Esophagus squamous epithelium (tissue), 5 donors: ENCODE measurements at regions of chr1 and their contacts with region 1.

Region 1: DNA sequence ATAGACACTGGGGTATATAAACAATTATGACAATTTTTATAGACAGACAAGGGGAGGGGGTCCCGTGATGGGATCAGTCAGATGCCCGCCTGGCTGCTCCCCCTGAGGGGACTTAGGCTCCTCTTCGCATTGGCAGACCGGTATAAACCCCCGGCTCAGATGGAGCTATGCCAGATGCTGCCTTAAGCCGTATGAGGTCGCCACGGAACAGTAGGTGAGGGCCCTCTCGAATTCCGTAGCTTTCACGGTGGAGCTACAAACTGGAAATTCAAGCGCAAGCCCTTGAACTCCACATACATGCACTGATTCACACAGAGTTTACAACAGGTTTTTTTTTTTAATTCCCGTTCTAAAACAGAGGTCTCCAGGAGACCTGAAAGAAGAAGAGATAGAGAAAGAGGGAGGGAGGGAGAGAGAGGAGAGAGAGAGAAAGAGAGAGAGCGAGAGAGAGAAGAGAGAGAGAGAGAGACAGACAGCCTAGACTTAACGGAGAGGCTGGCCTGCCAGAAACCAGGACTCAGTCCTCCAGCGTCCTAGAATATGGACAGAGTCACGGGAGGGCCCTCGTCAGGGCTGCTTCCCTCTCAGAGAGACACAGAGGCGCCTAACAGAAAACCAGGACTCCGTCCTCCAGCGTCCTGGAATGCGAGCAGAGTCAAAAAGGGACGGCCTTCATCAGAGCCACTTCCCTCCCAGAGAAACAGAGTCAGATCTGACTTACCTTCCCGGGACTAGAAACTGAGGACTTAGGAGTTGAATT is 24.4 kb upstream of the TMEM54 start:
- DNase-seq: no peak
- H3K4me3 ChIP-seq: peak overlapping the region in 1 of 4 donors; percentile 41
- H3K27ac ChIP-seq: no peak overlapping the region
- H3K4me1 ChIP-seq: peaks cover 8 to 17% (median 12%) of the 10 kb centered on the region in 3 donors
- H3K27me3 ChIP-seq: peaks cover 0 to 48% (median 2%) of the 10 kb centered on the region in 4 donors
- CTCF ChIP-seq: no peak
- POLR2A ChIP-seq: no peak

Region 2: GRCh38 chr1:33080885-33081553 is 155.4 kb after region 1 on chr1 and contains the start of gene AZIN2:
- intact Hi-C with region 1: loop called (anchors 10 kb)
- DNase-seq: peak; percentile 84
- H3K4me3 ChIP-seq: peak within 1 kb of the TSS; percentile 60 to 82 (median 78)
- H3K27ac ChIP-seq: peak within 1 kb of the TSS in 3 of 4 donors; percentile 18 to 64 (median 60)
- H3K4me1 ChIP-seq: peaks cover 12 to 27% (median 17%) of the 10 kb centered on the region in 3 donors
- H3K27me3 ChIP-seq: peaks cover 0 to 3% (median 0%) of the 10 kb centered on the region in 4 donors
- CTCF ChIP-seq: no peak
- POLR2A ChIP-seq: peak in 2 of 4 donors; percentile 67
- total RNA-seq, gene AZIN2: 0.27 to 1.5 (median 0.61) TPM

Region 3: DNA sequence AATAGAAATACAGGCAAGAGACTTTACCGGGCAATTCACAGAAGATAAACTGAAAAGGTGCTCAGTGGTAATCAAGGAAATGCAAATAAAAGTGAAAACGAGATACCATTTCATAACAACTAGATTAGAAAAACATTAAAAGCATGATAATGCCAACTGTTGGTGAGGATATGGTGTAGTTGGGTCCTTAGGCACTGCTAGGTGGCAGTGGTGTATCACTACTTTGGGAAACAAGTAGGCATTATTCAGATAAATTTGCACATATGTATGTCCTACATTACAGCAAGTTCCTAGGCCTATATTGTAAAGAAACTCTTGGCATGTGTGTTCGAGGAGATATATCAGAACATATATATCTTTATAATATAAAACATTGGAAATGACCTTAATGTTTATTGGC is 186.4 kb after region 1 on chr1:
- intact Hi-C with region 1: no loop called
- DNase-seq: no peak
- H3K4me3 ChIP-seq: no peak overlapping the region
- H3K27ac ChIP-seq: no peak overlapping the region
- H3K4me1 ChIP-seq: no peaks in the 10 kb centered on the region
- H3K27me3 ChIP-seq: no peaks in the 10 kb centered on the region
- CTCF ChIP-seq: peak in 5 of 6 experiments; percentile 22 to 57 (median 33)
- POLR2A ChIP-seq: no peak

Region 4: DNA sequence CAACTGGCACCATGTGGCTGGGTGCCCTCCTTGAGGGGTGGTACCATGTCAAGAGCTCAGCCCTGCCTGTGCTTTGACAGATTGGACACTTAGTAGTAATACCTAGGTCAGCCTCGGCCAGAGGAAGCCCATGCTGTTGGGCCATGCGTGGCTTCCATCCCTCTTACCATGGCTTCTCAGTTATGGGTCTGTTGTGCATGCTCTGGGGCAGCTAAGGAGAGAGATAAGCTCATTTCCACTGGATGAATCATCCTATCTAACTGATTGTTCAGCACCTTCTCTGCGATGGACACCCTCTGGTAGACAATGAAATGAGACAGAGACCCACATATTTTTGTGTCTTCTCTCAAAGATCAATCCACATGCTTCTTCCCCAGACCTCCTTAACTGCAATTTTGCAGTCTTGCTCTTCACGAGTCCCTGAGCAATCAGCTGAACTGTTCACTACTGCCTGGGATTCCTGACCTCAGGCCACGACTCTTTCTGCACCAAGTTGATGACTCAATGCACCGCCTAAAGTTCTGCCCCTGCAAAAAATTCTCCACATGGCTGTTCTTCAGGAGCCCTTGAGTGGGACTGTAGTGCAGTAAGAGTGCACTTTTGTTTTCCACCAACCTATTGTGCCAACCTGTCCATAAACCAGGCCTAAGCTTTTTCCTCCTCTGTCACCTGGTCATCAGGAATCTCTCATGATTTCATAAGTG is 263.1 kb after region 1 on chr1:
- intact Hi-C with region 1: no loop called
- DNase-seq: no peak
- H3K4me3 ChIP-seq: no peak overlapping the region
- H3K27ac ChIP-seq: no peak overlapping the region
- H3K4me1 ChIP-seq: no peaks in the 10 kb centered on the region
- H3K27me3 ChIP-seq: peaks cover 0 to 11% (median 0%) of the 10 kb centered on the region in 4 donors
- CTCF ChIP-seq: no peak
- POLR2A ChIP-seq: no peak